Endothelial cell of umbilical vein (primary cell): ENCODE measurements at regions of chr1 and their contacts with region 1.

Region 1: DNA sequence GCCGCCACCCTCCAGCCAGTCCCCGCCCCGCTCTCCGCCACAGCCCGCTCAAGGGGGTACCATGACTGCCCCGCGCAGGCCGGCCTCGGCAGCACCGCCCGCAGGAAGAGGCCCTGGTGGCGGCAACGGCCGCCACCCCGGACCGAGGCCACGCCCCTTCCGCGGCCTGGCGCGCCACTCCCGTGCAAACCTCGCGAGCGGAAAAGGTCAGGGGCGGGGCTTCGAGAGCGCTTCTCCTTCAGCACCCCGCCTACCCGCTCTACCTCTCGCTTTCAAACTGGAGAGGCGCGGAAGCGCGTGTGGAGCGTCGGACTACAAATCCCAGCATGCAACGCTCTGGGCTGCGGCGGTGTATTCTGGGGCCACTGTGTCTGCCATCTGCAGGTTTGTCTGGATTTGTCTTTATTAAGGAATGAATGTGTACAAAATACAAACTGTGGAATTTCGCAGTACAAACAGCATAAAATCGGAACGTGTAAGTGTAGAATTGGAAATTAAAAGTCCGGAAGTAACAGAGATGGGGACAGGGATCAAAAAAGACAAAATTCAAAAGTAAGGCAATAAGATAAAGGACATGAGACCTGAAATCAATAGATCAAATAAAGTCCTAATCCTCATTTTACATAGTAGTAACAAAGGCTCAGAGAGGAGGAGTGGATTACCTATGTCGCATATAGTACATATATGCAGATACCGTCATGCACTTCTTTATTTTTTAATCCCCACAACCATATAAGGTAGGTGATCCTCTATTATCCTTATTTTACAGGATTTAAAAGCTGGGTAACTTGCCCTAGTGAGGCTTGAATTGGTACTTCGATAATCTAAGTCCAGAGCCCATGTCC is 464 bp upstream of the ADSS2 start:
- DNase-seq: peak; percentile 99
- H3K4me3 ChIP-seq: peak overlapping the region in 2 of 3 experiments; percentile 66 to 94
- H3K27ac ChIP-seq: peak overlapping the region; percentile 42
- H3K4me1 ChIP-seq: peaks cover 39% of the 10 kb centered on the region
- H3K27me3 ChIP-seq: no peaks in the 10 kb centered on the region
- CTCF ChIP-seq: peak; percentile 55 to 60
- POLR2A ChIP-seq: no peak

Region 2: DNA sequence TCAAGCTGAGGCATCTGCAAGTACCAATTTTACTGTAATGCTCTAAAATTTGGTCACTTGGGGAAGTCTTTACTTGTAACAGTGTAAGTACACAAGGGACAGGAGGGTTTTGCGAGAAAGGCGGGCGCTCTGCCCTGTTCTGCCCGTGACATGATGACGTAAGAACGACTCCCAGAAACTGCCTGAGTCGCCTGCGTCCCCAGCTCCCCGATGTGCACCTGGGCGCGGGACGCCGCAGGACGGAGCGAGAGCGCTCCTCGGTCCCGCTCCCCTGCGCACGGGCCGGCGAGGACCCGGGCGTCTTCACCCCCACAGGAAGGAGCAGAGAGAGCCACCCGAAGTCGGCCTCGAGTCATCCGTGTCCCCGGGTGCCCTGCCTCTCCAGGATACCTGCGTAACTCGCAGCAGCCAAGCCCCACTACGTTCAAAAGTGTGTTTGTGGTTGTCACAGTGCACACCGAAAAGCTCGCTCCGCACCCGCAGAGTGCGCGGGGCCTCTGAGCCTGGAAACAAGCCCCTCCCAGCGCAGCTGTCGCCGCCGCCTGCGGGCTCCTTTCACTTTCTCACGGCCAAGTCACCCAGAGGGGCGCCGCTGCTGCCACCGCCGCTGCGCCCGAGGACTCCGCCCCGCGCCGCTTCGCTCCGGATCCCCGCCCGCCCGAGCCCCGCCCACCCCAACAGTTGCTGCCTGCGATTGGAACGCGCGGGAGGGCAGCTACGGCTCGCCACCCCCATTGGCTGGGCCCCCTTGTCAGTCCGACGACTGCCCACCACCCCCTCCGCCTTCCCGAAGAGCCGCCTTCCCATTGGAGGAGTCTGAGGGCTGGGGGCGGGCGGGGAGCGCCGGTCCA is 404.3 kb before region 1 on chr1:
- CTCF ChIA-PET with region 1: no interaction called
- POLR2A ChIA-PET with region 1: no interaction called
- dilution Hi-C with region 1: no loop called
- intact Hi-C with region 1: loop called (anchors 5 kb)
- DNase-seq: peak; percentile 100
- H3K4me3 ChIP-seq: peak overlapping the region; percentile 66 to 86 (median 77)
- H3K27ac ChIP-seq: peak overlapping the region; percentile 93
- H3K4me1 ChIP-seq: peaks cover 33% of the 10 kb centered on the region
- H3K27me3 ChIP-seq: no peaks in the 10 kb centered on the region
- CTCF ChIP-seq: no peak
- POLR2A ChIP-seq: peak; percentile 85

Region 3: GRCh38 chr1:244319283-244320132 is 132.7 kb before region 1 on chr1:
- CTCF ChIA-PET with region 1: no interaction called
- POLR2A ChIA-PET with region 1: no interaction called
- dilution Hi-C with region 1: no loop called
- intact Hi-C with region 1: loop called (anchors 1 kb)
- DNase-seq: no peak
- H3K4me3 ChIP-seq: no peak overlapping the region
- H3K27ac ChIP-seq: peak overlapping the region; percentile 16
- H3K4me1 ChIP-seq: peaks cover 49% of the 10 kb centered on the region
- H3K27me3 ChIP-seq: no peaks in the 10 kb centered on the region
- CTCF ChIP-seq: no peak
- POLR2A ChIP-seq: no peak

Region 4: DNA sequence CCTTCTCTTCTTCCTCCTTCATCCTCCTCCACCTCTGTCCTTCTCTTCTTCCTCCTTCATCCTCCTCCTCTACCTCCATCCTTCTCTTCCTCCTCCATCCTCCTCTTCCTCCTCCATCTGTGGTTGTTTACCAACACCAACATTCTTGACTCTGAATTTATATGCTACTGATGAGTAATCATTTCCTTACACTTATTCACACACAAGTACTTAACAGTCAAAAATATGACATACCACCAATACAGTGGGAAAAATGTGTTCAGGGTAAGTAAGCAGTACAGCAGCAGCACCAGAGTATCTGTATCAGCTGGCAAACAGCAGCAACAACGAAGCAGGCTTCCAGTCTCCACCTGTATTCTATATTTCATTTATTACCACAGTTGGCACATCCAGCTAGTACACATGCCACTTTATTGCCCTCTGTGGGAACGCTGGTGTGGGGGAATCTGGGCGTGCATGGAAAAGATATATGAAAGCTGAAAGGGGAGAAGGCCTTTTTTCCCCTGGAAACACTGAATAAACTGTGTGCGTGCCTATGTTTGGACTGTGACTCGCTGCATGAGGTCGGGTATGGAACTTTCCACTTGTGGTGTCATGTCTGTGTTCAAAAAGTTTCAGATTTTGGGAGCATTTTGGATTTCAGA is 16.5 kb before region 1 on chr1:
- CTCF ChIA-PET with region 1: interaction called, 11 read pairs
- POLR2A ChIA-PET with region 1: no interaction called
- dilution Hi-C with region 1: no loop called
- intact Hi-C with region 1: loop called (anchors 1 kb)
- DNase-seq: peak; percentile 82
- H3K4me3 ChIP-seq: no peak overlapping the region
- H3K27ac ChIP-seq: peak overlapping the region; percentile 75
- H3K4me1 ChIP-seq: peaks cover 37% of the 10 kb centered on the region
- H3K27me3 ChIP-seq: no peaks in the 10 kb centered on the region
- CTCF ChIP-seq: no peak
- POLR2A ChIP-seq: no peak

Region 5: DNA sequence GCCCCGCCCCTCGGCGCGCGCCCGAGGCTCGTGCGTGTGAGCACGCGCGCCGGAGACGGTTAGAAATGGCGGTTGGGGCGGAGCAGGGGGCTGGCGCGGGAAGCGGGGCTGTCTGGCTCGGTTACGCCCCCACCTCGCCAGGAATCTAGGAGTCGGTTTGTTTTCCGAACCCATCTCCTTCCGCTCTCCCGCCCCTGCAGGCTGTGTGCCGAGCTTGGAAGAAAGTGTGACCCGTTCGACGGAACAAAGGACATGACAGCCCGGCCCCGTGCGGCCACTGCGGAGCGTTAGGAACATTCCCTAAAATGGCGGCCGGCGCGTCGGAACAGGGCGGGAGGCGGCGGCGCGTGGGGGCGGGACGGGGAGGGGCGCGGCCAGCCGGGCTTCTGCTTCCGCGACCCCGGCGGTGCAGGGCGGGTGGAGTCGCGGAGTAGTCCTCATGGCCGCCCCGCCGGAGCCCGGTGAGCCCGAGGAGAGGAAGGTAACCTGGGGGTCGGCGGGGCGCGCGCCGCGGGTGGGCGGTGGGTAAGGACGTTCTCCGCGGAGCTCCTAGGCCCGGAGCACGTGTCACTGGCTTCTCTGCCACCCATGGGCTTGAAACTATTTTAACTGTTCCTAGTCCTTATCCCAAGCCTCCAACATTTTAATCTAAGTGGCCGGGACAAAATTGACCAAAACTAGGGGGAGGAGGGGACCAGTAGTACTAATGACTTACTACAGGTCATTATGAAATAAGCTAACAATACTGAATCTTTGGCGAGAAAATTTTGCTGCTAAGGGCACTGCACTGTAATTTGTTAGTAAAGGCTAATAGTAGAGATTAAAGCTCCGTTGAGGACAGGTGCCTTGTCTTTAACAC is 383.3 kb after region 1 on chr1 and contains the start of gene COX20:
- CTCF ChIA-PET with region 1: no interaction called
- POLR2A ChIA-PET with region 1: no interaction called
- dilution Hi-C with region 1: no loop called
- intact Hi-C with region 1: loop called (anchors 10 kb)
- DNase-seq: peak; percentile 91
- H3K4me3 ChIP-seq: peak within 1 kb of the TSS; percentile 36 to 85 (median 80)
- H3K27ac ChIP-seq: peak within 1 kb of the TSS; percentile 85
- H3K4me1 ChIP-seq: peaks cover 23% of the 10 kb centered on the region
- H3K27me3 ChIP-seq: no peaks in the 10 kb centered on the region
- CTCF ChIP-seq: no peak
- POLR2A ChIP-seq: peak; percentile 68
- total RNA-seq, gene COX20: 30.2 and 37.0 TPM in 2 replicates

Region 6: DNA sequence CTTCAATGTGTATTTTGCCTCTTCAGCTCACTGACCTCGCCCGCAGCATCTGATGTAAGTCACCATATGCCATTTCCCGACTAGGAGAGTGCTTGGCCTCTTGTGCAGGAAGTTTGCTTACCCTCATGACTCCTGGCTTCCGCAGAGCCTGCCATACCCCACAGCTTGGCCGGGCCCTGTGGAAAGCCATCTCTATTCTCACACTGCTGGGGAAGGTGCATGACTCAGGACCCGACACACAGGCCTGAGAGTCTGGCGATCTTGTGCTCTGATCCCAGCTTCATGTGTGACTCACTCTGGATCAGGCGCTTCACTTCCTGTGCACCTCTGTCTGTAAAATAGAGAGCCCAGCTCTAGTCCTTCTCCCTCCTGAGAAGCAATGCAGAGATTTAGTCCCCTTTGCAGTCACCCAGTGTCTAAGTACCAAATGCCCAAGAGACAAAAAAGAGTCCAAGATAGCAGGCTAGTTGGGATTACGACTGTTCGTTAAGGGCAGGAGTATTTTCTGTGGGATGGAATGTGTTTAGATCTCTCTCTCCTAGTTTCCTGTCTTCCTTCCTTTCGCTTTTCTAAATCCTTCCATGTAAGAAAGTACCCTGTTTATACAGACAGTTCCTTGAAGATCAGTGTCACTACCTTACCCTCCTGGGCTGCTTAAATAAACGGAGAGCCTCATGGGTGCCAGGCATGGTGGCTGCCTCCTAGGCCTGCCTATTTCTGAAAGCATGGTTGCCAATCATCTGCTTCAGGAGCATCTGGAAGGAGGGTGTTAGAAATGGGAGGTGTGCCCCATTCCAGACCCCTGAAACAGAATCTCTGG is 639.9 kb after region 1 on chr1:
- CTCF ChIA-PET with region 1: no interaction called
- POLR2A ChIA-PET with region 1: no interaction called
- dilution Hi-C with region 1: no loop called
- intact Hi-C with region 1: loop called (anchors 5 kb)
- DNase-seq: peak; percentile 99
- H3K4me3 ChIP-seq: no peak overlapping the region
- H3K27ac ChIP-seq: peak overlapping the region; percentile 96
- H3K4me1 ChIP-seq: peaks cover 23% of the 10 kb centered on the region
- H3K27me3 ChIP-seq: no peaks in the 10 kb centered on the region
- CTCF ChIP-seq: no peak
- POLR2A ChIP-seq: peak; percentile 63